Naive thymus-derived CD4-positive, alpha-beta T cell (primary cell): ENCODE measurements at regions of chr2 and their contacts with region 1.

Region 1: DNA sequence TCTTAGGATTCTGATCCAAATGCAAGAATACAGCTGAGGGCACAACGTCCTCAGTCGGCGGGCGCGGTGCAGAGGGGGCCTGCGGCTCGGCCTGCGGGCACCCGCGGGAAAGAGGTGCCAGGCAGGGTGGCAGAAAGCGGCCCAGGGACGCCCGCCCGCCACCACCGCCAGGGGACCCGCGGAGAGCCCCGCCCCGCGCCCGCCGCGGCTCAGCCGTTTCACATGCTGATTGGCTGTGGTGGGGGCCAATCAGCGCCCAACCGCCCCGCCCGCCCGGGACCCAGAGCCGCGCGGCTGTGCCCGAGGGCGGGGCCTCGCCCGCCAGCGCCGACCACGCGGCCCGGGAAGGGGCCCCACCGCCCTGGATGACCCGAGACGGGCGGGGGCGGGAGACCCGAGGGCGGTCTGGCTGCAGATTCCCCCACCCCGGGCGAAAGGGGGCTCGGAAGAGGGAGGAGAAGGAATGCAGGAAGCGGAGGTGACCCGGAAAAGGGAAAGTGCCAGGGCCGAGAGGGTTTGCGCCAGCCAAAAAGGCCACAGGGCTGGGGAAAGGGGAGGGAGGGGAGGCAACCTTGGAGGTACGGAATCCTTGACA is 8.0 kb downstream of the IRS1 start:
- DNase-seq: peak; percentile 88 to 96 (median 94)
- ATAC-seq: peak; percentile 97
- H3K4me3 ChIP-seq: peak overlapping the region; percentile 79
- H3K4me3 Mint-ChIP-seq: peak overlapping the region; percentile 92 to 99 (median 97)
- H3K27ac ChIP-seq: peak overlapping the region; percentile 97
- H3K27ac Mint-ChIP-seq: peak overlapping the region; percentile 99 to 100 (median 99)
- H3K4me1 ChIP-seq: peaks cover 8 to 12% of the 10 kb centered on the region in 2 donors
- H3K4me1 Mint-ChIP-seq: peaks cover 5 to 61% (median 41%) of the 10 kb centered on the region in 7 donors
- H3K27me3 ChIP-seq: no peaks in the 10 kb centered on the region
- H3K27me3 Mint-ChIP-seq: no peaks in the 10 kb centered on the region

Region 2: DNA sequence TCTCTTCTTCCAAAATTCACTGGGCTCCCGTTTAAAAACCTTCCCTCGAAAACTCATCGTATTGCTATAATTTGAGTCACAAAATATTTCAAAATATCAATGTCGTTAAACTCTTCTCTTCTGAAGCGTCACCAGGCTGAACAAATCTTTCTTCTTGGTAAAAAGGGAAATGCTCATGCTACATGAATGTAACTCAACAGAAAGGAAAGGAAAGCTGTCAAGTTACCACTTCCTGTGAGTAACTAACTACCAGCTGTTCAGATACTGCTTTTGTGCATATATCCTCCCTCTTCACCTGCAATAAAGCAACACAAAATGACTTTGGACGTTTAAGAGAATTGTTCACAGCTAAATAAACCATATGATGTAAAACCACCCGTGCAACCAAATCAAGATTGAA is 1844.7 kb before region 1 on chr2:
- CTCF ChIA-PET with region 1: no interaction called
- POLR2A ChIA-PET with region 1: no interaction called
- intact Hi-C with region 1: loop called in 1 of 2 experiments (anchors 5 kb)
- DNase-seq: peak in 7 of 9 donors; percentile 60 to 82 (median 77)
- ATAC-seq: peak; percentile 90
- H3K4me3 ChIP-seq: peak overlapping the region; percentile 59
- H3K4me3 Mint-ChIP-seq: peak overlapping the region; percentile 79 to 99 (median 91)
- H3K27ac ChIP-seq: peak overlapping the region; percentile 84
- H3K27ac Mint-ChIP-seq: peak overlapping the region; percentile 68 to 98 (median 92)
- H3K4me1 ChIP-seq: peaks cover 52 to 69% of the 10 kb centered on the region in 2 donors
- H3K4me1 Mint-ChIP-seq: peaks cover 54 to 91% (median 79%) of the 10 kb centered on the region in 7 donors
- H3K27me3 ChIP-seq: no peaks in the 10 kb centered on the region
- H3K27me3 Mint-ChIP-seq: no peaks in the 10 kb centered on the region

Region 3: GRCh38 chr2:226649871-226650660 is 141.5 kb before region 1 on chr2:
- CTCF ChIA-PET with region 1: no interaction called
- POLR2A ChIA-PET with region 1: interaction called, 3 read pairs
- intact Hi-C with region 1: loop called in 1 of 2 experiments (anchors 1 kb)
- DNase-seq: peak in 5 of 9 donors; percentile 21 to 45 (median 37)
- ATAC-seq: peak; percentile 62
- H3K4me3 ChIP-seq: no peak overlapping the region
- H3K4me3 Mint-ChIP-seq: peak overlapping the region in 9 of 10 donors; percentile 8 to 61 (median 51)
- H3K27ac ChIP-seq: no peak overlapping the region
- H3K27ac Mint-ChIP-seq: peak overlapping the region in 8 of 9 donors; percentile 48 to 97 (median 78)
- H3K4me1 ChIP-seq: peaks cover 0 to 9% of the 10 kb centered on the region in 2 donors
- H3K4me1 Mint-ChIP-seq: peaks cover 5 to 55% (median 23%) of the 10 kb centered on the region in 7 donors
- H3K27me3 ChIP-seq: no peaks in the 10 kb centered on the region
- H3K27me3 Mint-ChIP-seq: peaks cover 0 to 18% (median 0%) of the 10 kb centered on the region in 5 donors

Region 4: DNA sequence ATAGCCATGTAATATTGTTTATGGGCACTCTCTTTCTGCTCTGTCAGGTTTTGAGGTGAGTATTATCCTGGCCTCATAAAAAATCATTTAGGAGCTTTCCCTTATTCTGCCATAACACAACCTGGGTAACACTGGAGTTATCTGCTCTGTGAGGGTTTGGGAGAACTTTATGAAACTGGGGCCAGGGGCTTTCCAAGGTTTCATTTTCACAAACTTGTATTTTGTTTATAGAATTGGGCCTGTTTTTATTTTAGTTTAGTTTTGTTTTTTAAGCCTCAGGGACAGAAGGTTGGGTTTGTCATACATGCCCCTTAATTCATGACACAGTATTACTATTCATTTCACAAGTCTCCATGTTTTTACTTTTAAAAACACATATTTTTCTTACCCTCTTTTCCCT is 75.5 kb before region 1 on chr2:
- CTCF ChIA-PET with region 1: no interaction called
- POLR2A ChIA-PET with region 1: no interaction called
- intact Hi-C with region 1: loop called in 1 of 2 experiments (anchors 5 kb)
- DNase-seq: no peak
- ATAC-seq: no peak
- H3K4me3 ChIP-seq: no peak overlapping the region
- H3K4me3 Mint-ChIP-seq: no peak overlapping the region
- H3K27ac ChIP-seq: no peak overlapping the region
- H3K27ac Mint-ChIP-seq: peak overlapping the region in 1 of 9 donors; percentile 11
- H3K4me1 ChIP-seq: no peaks in the 10 kb centered on the region
- H3K4me1 Mint-ChIP-seq: peaks cover 0 to 18% (median 0%) of the 10 kb centered on the region in 7 donors
- H3K27me3 ChIP-seq: peaks cover 0 to 3% of the 10 kb centered on the region in 2 donors
- H3K27me3 Mint-ChIP-seq: peaks cover 4 to 20% (median 12%) of the 10 kb centered on the region in 5 donors

Region 5: DNA sequence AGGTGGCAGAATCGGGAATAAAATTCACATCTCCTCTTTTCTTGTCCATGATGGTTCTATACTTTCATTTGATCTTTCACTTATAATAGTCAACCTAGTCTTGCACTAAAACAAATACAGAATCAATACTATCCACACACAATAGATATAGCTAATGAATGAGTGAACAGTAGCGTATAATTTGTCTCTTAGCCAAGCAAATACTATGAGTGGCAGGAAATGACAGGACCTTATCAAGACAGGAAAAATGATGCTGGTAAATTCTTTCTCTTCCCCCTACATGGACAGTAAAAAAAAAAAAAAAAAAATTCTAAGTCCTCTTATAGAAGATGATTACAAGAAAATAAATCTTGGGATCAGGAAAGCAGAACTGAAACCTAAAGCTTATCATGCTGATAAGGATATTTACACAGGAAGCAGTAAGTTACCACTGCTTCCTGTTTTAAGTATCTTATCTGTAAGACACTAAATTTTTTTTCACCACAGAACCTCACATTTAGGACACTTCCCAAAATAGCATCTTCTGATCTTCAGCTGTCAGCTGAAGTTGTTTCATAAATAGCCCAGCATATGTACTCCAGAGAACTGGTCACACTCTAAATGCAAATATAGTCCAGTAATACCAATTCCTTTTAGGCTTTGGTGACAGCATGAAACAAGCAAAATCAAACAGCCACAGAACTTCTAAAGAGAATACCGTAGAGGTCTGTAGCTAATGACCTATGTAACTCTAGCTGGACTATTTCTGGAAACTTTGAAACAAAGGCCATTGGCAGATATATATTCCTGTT is 19.0 kb before region 1 on chr2:
- CTCF ChIA-PET with region 1: interaction called, 6 read pairs
- POLR2A ChIA-PET with region 1: interaction called, 10 read pairs
- intact Hi-C with region 1: loop called (anchors 1 kb)
- DNase-seq: peak in 3 of 9 donors; percentile 14 to 26 (median 23)
- ATAC-seq: peak; percentile 80
- H3K4me3 ChIP-seq: peak overlapping the region; percentile 2
- H3K4me3 Mint-ChIP-seq: peak overlapping the region; percentile 27 to 83 (median 76)
- H3K27ac ChIP-seq: no peak overlapping the region
- H3K27ac Mint-ChIP-seq: peak overlapping the region in 8 of 9 donors; percentile 5 to 80 (median 38)
- H3K4me1 ChIP-seq: peaks cover 16 to 19% of the 10 kb centered on the region in 2 donors
- H3K4me1 Mint-ChIP-seq: peaks cover 18 to 30% (median 29%) of the 10 kb centered on the region in 7 donors
- H3K27me3 ChIP-seq: no peaks in the 10 kb centered on the region
- H3K27me3 Mint-ChIP-seq: no peaks in the 10 kb centered on the region

Region 6: DNA sequence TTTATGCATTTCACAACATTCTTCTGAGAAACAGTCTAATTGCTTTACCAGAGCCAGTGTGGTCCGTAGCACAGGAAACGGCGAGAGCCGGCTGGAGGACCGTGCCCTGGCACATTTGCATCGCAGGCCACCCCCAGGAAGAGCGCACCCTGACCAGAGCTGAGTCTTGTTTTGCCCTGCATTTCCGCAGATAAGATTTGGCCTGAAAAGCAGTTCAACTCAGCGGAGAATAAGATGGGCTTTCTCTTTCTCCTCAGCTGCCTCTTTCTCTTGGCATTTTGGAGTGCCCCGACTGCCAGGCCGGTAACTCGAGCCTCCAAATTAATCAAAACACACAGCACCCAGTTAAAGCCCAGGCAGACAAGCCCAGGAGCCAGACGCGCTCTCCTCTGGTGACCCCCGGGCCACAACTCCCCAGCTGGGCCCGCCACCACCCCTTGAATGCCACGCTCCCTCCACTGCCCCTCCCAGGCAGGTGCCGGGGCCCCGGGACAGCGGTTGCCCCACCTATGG is 372.0 kb after region 1 on chr2:
- CTCF ChIA-PET with region 1: no interaction called
- POLR2A ChIA-PET with region 1: no interaction called
- intact Hi-C with region 1: no loop called
- DNase-seq: no peak
- ATAC-seq: peak; percentile 6
- H3K4me3 ChIP-seq: no peak overlapping the region
- H3K4me3 Mint-ChIP-seq: peak overlapping the region; percentile 46 to 79 (median 66)
- H3K27ac ChIP-seq: no peak overlapping the region
- H3K27ac Mint-ChIP-seq: no peak overlapping the region
- H3K4me1 ChIP-seq: no peaks in the 10 kb centered on the region
- H3K4me1 Mint-ChIP-seq: peaks cover 0 to 12% (median 9%) of the 10 kb centered on the region in 7 donors
- H3K27me3 ChIP-seq: peaks cover 0 to 9% of the 10 kb centered on the region in 2 donors
- H3K27me3 Mint-ChIP-seq: peaks cover 65 to 78% (median 71%) of the 10 kb centered on the region in 5 donors

Region 7: DNA sequence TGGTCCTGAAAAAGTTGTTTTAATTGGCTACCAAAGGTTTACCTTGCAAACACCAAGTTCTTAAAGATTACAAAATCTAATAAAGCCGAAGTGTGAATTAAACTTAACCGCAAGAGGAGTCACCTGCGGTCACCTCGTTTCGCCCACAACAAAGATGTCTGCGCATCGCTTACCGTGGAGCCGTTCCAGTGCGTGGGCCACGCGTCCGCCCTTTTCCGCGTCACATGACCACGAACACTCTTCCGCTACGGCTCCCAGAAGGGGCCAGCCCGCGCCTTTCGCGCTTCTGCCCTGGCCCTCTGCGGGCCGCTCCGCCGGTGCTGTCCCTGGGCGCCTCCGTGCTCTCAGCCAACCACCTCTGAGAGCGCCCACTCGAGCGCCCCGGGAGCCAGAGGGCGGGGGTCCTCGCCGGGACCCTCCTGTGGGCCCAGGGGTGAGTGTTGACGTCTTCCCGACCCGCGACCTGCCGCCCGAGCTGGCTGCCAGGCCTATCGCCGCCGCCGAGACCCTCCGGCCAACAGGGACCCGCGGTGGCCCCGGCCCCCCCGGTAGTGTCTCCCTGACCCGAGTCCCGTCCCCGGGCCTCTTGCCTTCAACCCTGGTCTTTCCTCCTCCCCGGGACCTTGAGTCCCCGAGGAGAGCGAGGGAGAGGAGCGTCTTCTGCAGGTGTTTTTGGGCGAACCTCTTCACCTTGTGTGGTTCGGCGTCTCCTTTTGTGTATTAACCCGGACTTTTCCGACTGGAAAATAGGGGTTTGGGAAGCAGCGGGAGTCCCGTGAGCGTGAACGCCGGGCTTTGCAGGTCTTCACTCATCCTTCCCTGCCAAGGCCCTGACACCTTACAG is 533.6 kb after region 1 on chr2 and contains the start of gene MFF:
- CTCF ChIA-PET with region 1: no interaction called
- POLR2A ChIA-PET with region 1: no interaction called
- intact Hi-C with region 1: loop called (anchors 1 kb)
- DNase-seq: peak; percentile 82 to 93 (median 93)
- ATAC-seq: peak; percentile 99
- H3K4me3 ChIP-seq: peak within 1 kb of the TSS; percentile 76
- H3K4me3 Mint-ChIP-seq: peak within 1 kb of the TSS; percentile 91 to 97 (median 96)
- H3K27ac ChIP-seq: peak within 1 kb of the TSS; percentile 92
- H3K27ac Mint-ChIP-seq: peak within 1 kb of the TSS; percentile 83 to 97 (median 95)
- H3K4me1 ChIP-seq: peaks cover 4 to 24% of the 10 kb centered on the region in 2 donors
- H3K4me1 Mint-ChIP-seq: peaks cover 8 to 59% (median 46%) of the 10 kb centered on the region in 7 donors
- H3K27me3 ChIP-seq: no peaks in the 10 kb centered on the region
- H3K27me3 Mint-ChIP-seq: peaks cover 0 to 13% (median 0%) of the 10 kb centered on the region in 5 donors
- total RNA-seq, gene MFF: 51.7 to 64.7 (median 61.8) TPM

Region 8: GRCh38 chr2:227471924-227472264 is 680.3 kb after region 1 on chr2 and contains the start of gene AGFG1:
- CTCF ChIA-PET with region 1: no interaction called
- POLR2A ChIA-PET with region 1: no interaction called
- intact Hi-C with region 1: loop called in 1 of 2 experiments (anchors 5 kb)
- DNase-seq: peak; percentile 71 to 90 (median 81)
- ATAC-seq: peak; percentile 97
- H3K4me3 ChIP-seq: peak within 1 kb of the TSS; percentile 55
- H3K4me3 Mint-ChIP-seq: peak within 1 kb of the TSS; percentile 86 to 96 (median 93)
- H3K27ac ChIP-seq: peak within 1 kb of the TSS; percentile 80
- H3K27ac Mint-ChIP-seq: peak within 1 kb of the TSS; percentile 77 to 94 (median 86)
- H3K4me1 ChIP-seq: peaks cover 30 to 40% of the 10 kb centered on the region in 2 donors
- H3K4me1 Mint-ChIP-seq: peaks cover 33 to 65% (median 60%) of the 10 kb centered on the region in 7 donors
- H3K27me3 ChIP-seq: no peaks in the 10 kb centered on the region
- H3K27me3 Mint-ChIP-seq: no peaks in the 10 kb centered on the region
- total RNA-seq, gene AGFG1: 52.8 to 84.5 (median 58.2) TPM